ENCODE measurements at regions of chr3 and their contacts with region 1.

Region 1: DNA sequence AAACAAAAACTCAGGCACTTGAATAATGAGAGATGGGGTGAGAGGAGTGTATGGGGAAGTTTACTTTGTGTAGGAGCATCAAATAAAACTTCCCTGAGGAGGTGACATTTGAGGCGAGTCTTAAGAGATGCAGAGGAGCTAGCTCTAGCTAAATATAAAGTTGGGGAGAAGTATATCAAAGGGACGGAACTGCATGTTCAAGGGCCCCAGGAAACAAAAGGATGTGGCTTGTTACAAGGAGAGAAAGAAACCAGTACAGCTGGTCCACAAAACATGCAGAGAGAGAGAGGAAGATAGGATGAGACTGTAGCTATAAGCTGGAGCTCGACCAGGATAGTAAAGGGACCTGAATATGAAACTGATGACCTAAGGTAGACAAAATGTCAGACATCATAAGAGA is 17.6 kb downstream of the FEZF2 start:
- DNase-seq: no peak
- H3K4me3 ChIP-seq: no peak overlapping the region
- H3K27ac ChIP-seq: no peak overlapping the region
- H3K4me1 ChIP-seq: no peaks in the 10 kb centered on the region
- H3K27me3 ChIP-seq: peaks cover 25% of the 10 kb centered on the region
- CTCF ChIP-seq: no peak
- EP300 ChIP-seq: no peak
- POLR2A ChIP-seq: no peak

Region 2: GRCh38 chr3:62318750-62319569 is 36.7 kb before region 1 on chr3:
- in situ Hi-C with region 1: no loop called
- intact Hi-C with region 1: no loop called
- DNase-seq: peak; percentile 67
- H3K4me3 ChIP-seq: peak overlapping the region; percentile 25 to 50 (median 42)
- H3K27ac ChIP-seq: peak overlapping the region; percentile 60 to 76 (median 66)
- H3K4me1 ChIP-seq: no peaks in the 10 kb centered on the region
- H3K27me3 ChIP-seq: no peaks in the 10 kb centered on the region
- CTCF ChIP-seq: no peak
- EP300 ChIP-seq: no peak
- POLR2A ChIP-seq: no peak

Region 3: DNA sequence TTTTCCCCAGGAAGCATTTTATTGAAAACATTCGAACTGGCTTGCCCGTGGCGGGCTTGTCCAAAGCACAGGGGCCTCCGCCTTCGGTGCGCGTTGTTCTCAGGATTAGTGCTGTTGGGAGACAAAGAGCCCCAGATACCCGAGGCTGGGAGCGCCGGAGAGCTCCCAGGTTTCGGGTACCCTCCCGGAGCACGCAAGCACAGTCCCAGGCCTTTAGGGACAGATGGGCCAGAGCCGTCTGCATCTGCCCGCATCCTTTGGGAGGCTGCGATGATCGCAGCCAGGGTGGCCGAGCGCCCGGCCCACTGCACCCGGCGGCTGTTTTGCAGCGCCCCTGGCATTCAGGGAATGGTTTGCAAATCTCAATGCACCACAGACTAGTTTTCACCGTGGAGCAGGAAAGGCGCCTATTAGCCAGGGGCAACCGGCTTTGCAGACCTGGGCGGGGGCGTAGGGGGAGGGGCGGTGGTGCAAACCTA is 22.6 kb after region 1 on chr3:
- in situ Hi-C with region 1: no loop called
- intact Hi-C with region 1: loop called (anchors 1 kb)
- DNase-seq: no peak
- H3K4me3 ChIP-seq: no peak overlapping the region
- H3K27ac ChIP-seq: no peak overlapping the region
- H3K4me1 ChIP-seq: peaks cover 0 to 15% (median 0%) of the 10 kb centered on the region in 4 donors
- H3K27me3 ChIP-seq: peaks cover 98% of the 10 kb centered on the region
- CTCF ChIP-seq: no peak
- EP300 ChIP-seq: no peak
- POLR2A ChIP-seq: no peak

Measured in transverse colon (tissue), 4 donors.